Activated CD8-positive, alpha-beta memory T cell treated with anti-CD3 and anti-CD28 coated beads, Interleukin-2, amount 10 ng/mL, durations not matched to agents 7 days and 5 days (primary cell): ENCODE measurements at regions of chr2 and their contacts with region 1.

Region 1: GRCh38 chr2:6865346-6866274 is at the start of gene CMPK2:
- DNase-seq: peak; percentile 95
- ATAC-seq: peak; percentile 88
- H3K4me3 Mint-ChIP-seq: peak within 1 kb of the TSS; percentile 98
- H3K27ac Mint-ChIP-seq: peak within 1 kb of the TSS; percentile 100
- H3K4me1 Mint-ChIP-seq: peaks cover 59% of the 10 kb centered on the region
- H3K27me3 Mint-ChIP-seq: no peaks in the 10 kb centered on the region
- total RNA-seq, gene CMPK2: 81.3 to 164 TPM

Region 2: GRCh38 chr2:6846967-6847681 is 18.5 kb before region 1 on chr2:
- CTCF ChIA-PET with region 1: interaction called, 10 read pairs
- DNase-seq: no peak
- ATAC-seq: no peak
- H3K4me3 Mint-ChIP-seq: no peak overlapping the region
- H3K27ac Mint-ChIP-seq: no peak overlapping the region
- H3K4me1 Mint-ChIP-seq: peaks cover 38% of the 10 kb centered on the region
- H3K27me3 Mint-ChIP-seq: no peaks in the 10 kb centered on the region

Region 3: DNA sequence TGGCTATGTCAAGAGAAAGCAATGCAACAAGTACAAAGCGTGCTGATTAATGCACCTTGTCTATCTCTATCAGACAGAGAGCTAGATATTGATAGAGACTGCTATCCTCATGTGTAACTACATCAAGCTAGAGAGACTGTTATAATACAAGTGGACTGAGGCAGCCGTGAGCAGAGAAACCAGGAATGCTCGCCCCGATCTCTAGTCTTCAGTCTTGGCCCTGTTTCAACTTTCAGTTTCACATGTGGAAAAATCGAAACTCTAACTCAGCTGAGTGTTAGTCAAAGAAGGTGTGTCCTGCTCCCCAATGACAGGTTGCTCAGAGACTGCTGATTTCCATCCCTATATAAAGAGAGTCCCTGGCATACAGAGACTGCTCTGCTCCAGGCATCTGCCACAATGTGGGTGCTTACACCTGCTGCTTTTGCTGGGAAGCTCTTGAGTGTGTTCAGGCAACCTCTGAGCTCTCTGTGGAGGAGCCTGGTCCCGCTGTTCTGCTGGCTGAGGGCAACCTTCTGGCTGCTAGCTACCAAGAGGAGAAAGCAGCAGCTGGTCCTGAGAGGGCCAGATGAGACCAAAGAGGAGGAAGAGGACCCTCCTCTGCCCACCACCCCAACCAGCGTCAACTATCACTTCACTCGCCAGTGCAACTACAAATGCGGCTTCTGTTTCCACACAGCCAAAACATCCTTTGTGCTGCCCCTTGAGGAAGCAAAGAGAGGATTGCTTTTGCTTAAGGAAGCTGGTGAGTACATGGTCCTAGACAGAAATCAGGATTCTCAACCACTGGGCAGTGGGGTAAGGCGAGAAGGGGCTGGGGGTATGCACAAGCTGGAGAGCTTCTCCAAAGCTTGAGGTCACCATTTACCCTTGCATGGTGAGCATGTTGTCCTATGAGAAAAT is 12.0 kb after region 1 on chr2 and contains the start of gene RSAD2:
- CTCF ChIA-PET with region 1: interaction called, 118 read pairs
- DNase-seq: peak; percentile 80
- ATAC-seq: peak; percentile 90
- H3K4me3 Mint-ChIP-seq: peak within 1 kb of the TSS; percentile 89
- H3K27ac Mint-ChIP-seq: peak within 1 kb of the TSS; percentile 98
- H3K4me1 Mint-ChIP-seq: peaks cover 55% of the 10 kb centered on the region
- H3K27me3 Mint-ChIP-seq: no peaks in the 10 kb centered on the region
- total RNA-seq, gene RSAD2: 83.0 to 183 TPM

Region 4: GRCh38 chr2:6909431-6910385 is 44.1 kb after region 1 on chr2:
- CTCF ChIA-PET with region 1: interaction called, 28 read pairs
- DNase-seq: peak; percentile 83
- ATAC-seq: peak; percentile 84
- H3K4me3 Mint-ChIP-seq: peak overlapping the region; percentile 50
- H3K27ac Mint-ChIP-seq: peak overlapping the region; percentile 86
- H3K4me1 Mint-ChIP-seq: peaks cover 86% of the 10 kb centered on the region
- H3K27me3 Mint-ChIP-seq: peaks cover 11% of the 10 kb centered on the region

Region 5: DNA sequence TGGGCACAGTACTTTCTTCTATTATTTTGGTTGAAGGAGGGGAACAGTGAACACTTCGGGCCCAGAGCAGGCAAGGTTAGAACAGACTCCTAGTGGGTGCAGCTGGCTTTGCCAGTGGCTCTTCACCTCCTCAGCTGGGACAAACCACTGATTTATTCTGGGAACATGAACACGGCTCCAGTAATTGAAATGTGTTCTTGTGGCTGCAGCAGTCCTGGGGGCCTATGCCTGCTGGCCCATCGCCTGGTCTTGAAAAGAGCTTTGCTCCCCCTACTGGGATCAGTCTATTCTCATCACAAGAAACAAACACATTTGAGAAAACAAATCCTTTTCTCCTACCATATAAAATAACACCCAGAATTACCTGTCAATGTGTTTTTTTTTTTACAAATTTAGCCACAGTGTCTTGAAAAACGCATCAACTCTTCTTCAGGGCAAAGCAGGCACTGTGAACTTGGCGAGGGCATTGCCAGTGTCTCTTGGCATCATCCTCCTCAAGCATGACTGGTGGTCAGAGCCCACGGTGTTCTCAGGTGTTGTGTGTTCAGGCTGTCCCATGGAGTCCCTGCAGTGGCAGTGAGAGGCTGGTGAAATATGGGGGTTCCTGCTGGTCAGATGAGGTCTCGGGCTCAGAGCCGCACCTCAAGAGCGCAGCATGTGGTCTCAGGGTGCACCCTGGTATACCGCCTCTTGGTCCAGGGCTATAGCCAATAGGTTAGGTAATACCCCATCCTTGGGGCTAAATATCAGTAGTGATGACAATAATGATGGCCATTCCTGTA is 102.9 kb after region 1 on chr2:
- CTCF ChIA-PET with region 1: no interaction called
- DNase-seq: peak; percentile 19
- ATAC-seq: no peak
- H3K4me3 Mint-ChIP-seq: no peak overlapping the region
- H3K27ac Mint-ChIP-seq: no peak overlapping the region
- H3K4me1 Mint-ChIP-seq: no peaks in the 10 kb centered on the region
- H3K27me3 Mint-ChIP-seq: no peaks in the 10 kb centered on the region